RWPE1 (cell line): ENCODE measurements at regions of chr16 and their contacts with region 1.

Region 1: GRCh38 chr16:30805370-30806169 is 18.6 kb upstream of the ZNF629 start:
- DNase-seq: peak; percentile 77
- H3K27ac ChIP-seq: peak overlapping the region; percentile 91
- CTCF ChIP-seq: no peak

Region 2: GRCh38 chr16:30786936-30787612 is 18.5 kb before region 1 on chr16 and contains the start of gene ZNF629:
- CTCF ChIA-PET with region 1: interaction called, 3 read pairs
- POLR2A ChIA-PET with region 1: interaction called, 12 read pairs
- DNase-seq: peak; percentile 62
- H3K27ac ChIP-seq: peak within 1 kb of the TSS; percentile 84
- CTCF ChIP-seq: no peak